ENCODE measurements at regions of chr11 and their contacts with region 1.

Region 1: DNA sequence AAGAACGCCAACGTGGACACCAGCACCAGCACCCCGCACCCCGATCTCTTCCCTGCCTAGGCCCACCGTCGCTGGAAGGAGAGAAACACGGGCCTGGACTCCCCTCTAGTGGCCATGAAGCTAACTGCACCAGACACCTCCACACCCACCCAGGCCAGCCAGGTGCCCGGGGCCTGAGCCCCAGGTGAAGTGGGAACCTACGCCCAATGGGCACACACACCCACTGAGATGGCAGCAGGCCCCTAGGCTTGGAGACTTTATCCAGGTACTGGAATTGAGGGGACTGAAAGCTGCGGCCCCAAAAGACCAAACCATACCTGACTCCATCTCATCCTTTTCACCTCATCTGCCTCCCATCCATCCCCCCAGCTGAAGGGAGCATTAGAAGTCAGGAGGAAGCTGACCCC is 81.0 kb downstream of the BUD13 start:
- DNase-seq: peak in 1 of 2 experiments; percentile 44
- H3K4me3 ChIP-seq: no peak overlapping the region
- H3K27ac ChIP-seq: no peak overlapping the region
- H3K4me1 ChIP-seq: peaks cover 2% of the 10 kb centered on the region; the same call in 1 of the 2 replicates
- H3K27me3 ChIP-seq: peaks cover 21% of the 10 kb centered on the region
- CTCF ChIP-seq: peak; percentile 98

Region 2: GRCh38 chr11:115334932-115335788 is 1356.6 kb before region 1 on chr11:
- CTCF ChIA-PET with region 1: interaction called, 4 read pairs
- POLR2A ChIA-PET with region 1: no interaction called
- intact Hi-C with region 1: loop called (anchors 5 kb)
- DNase-seq: no peak
- H3K4me3 ChIP-seq: no peak overlapping the region
- H3K27ac ChIP-seq: no peak overlapping the region
- H3K4me1 ChIP-seq: no peaks in the 10 kb centered on the region
- H3K27me3 ChIP-seq: 0 out of 2 replicates have a peak, but pooled peaks cover 3% of the 10 kb centered on the region
- CTCF ChIP-seq: peak; percentile 81

Region 3: GRCh38 chr11:116715383-116715782 is 23.6 kb after region 1 on chr11:
- CTCF ChIA-PET with region 1: no interaction called
- POLR2A ChIA-PET with region 1: no interaction called
- intact Hi-C with region 1: no loop called
- DNase-seq: no peak
- H3K4me3 ChIP-seq: no peak overlapping the region
- H3K27ac ChIP-seq: no peak overlapping the region
- H3K4me1 ChIP-seq: no peaks in the 10 kb centered on the region
- H3K27me3 ChIP-seq: peaks cover 42% of the 10 kb centered on the region
- CTCF ChIP-seq: no peak

Region 4: GRCh38 chr11:116871248-116871647 is 179.5 kb after region 1 on chr11:
- CTCF ChIA-PET with region 1: no interaction called
- POLR2A ChIA-PET with region 1: no interaction called
- intact Hi-C with region 1: no loop called
- DNase-seq: peak in 1 of 2 experiments; percentile 20
- H3K4me3 ChIP-seq: no peak overlapping the region
- H3K27ac ChIP-seq: no peak overlapping the region; the same call in 1 of the 2 replicates
- H3K4me1 ChIP-seq: no peaks in the 10 kb centered on the region
- H3K27me3 ChIP-seq: no peaks in the 10 kb centered on the region
- CTCF ChIP-seq: no peak

Region 5: DNA sequence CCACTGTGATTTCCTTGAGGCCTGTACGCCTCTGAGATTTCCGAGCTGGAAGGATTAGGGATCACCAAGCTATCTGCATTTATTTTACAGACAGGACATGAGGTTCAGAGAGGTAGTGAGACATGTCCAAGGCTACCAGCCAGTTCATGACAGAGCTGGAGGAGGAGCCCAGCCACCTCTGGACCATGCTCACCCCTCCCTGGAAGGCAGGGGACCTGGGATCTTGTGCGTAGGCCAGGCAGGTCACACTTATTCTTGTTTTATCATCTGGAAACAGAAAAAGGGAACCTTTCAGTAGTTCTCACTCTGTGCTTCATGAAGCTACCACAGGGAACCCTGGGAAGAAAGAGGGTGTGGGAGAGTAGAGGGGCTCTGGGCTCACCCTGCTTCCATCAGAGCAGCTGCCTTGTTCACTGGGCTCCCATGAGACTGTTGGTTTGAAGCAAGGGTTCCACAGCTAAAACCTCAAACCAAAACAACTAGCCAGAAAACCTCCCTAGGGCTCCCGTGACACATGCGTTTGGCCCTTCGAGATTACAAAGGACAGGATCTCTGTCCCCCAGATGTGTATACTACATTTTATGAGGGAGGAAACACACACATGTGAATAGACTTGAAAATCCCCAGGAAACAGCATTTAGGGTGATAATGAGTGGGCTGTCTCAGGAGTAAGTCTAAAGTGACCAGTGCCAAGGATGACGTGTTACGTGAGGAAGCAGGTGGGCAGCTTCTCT is 998.9 kb after region 1 on chr11:
- CTCF ChIA-PET with region 1: no interaction called
- POLR2A ChIA-PET with region 1: no interaction called
- intact Hi-C with region 1: no loop called
- DNase-seq: no peak
- H3K4me3 ChIP-seq: no peak overlapping the region
- H3K27ac ChIP-seq: no peak overlapping the region
- H3K4me1 ChIP-seq: no peaks in the 10 kb centered on the region
- H3K27me3 ChIP-seq: peaks cover 93% of the 10 kb centered on the region
- CTCF ChIP-seq: no peak

Measured in PC-9 (cell line).